CD8-positive, alpha-beta memory T cell (primary cell): ENCODE measurements at regions of chr7 and their contacts with region 1.

Region 1: GRCh38 chr7:101814991-101815834 is 2.2 kb upstream of the CUX1 start:
- DNase-seq: peak; percentile 47 to 76 (median 64)
- H3K4me3 ChIP-seq: peak overlapping the region; percentile 65
- H3K4me3 Mint-ChIP-seq: peak overlapping the region; percentile 83 to 94 (median 89)
- H3K27ac ChIP-seq: peak overlapping the region; percentile 51
- H3K27ac Mint-ChIP-seq: peak overlapping the region; percentile 56 to 94 (median 76)
- H3K4me1 ChIP-seq: peaks cover 16% of the 10 kb centered on the region
- H3K4me1 Mint-ChIP-seq: peaks cover 27 to 36% (median 35%) of the 10 kb centered on the region in 3 donors
- H3K27me3 ChIP-seq: no peaks in the 10 kb centered on the region
- H3K27me3 Mint-ChIP-seq: peaks cover 3 to 5% of the 10 kb centered on the region in 2 donors

Region 2: DNA sequence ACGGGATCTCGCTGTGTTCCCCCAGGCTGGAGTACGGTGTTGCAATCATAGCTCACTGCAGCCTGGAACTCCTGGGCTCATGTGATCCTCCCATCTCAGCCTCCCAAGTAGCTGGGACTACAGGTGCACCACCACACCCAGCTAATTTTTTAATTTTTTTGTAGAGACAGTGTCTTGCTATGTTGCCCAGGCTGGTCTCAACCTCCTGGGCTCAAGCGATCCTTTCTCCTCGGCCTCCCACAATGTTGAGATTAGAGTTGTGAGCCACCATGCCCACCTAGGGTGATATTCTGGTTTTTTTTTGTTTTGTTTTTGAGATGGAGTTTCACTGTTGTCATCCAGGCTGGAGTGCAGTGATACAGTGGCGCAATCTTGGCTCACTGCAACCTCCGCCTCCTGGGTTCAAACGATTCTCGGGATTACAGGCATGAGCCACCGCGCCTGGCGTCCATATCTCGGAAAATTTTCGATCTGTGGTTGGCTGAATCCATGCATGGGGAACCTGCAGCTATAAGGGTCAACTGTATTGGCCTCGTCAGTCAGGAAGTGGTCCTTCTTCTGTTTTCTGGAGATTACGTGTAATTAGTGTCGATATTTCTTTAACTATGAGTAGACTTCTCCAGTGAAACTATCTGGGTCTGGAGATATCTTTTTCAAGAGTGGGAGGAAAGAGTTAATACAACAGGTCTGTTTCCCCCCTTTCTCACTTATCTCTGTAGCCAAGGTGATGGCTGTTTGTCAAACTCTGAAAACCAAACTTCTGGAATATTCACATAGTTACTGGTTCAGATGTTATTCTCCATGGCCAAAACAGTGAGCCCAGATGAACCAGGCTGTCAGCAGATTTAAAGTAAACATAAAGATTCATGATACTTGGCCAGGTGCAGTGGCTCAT is 549.3 kb before region 1 on chr7:
- CTCF ChIA-PET with region 1: no interaction called
- POLR2A ChIA-PET with region 1: no interaction called
- DNase-seq: no peak
- H3K4me3 ChIP-seq: no peak overlapping the region
- H3K4me3 Mint-ChIP-seq: no peak overlapping the region
- H3K27ac ChIP-seq: no peak overlapping the region
- H3K27ac Mint-ChIP-seq: no peak overlapping the region
- H3K4me1 ChIP-seq: no peaks in the 10 kb centered on the region
- H3K4me1 Mint-ChIP-seq: no peaks in the 10 kb centered on the region
- H3K27me3 ChIP-seq: no peaks in the 10 kb centered on the region
- H3K27me3 Mint-ChIP-seq: peaks cover 7 to 27% of the 10 kb centered on the region in 2 donors

Region 3: GRCh38 chr7:101743241-101743994 is 71.8 kb before region 1 on chr7:
- CTCF ChIA-PET with region 1: interaction called, 33 read pairs
- POLR2A ChIA-PET with region 1: no interaction called
- DNase-seq: peak; percentile 45 to 77 (median 65)
- H3K4me3 ChIP-seq: peak overlapping the region; percentile 58
- H3K4me3 Mint-ChIP-seq: peak overlapping the region; percentile 76 to 88 (median 81)
- H3K27ac ChIP-seq: no peak overlapping the region
- H3K27ac Mint-ChIP-seq: peak overlapping the region in 2 of 8 donors; percentile 47 to 51
- H3K4me1 ChIP-seq: peaks cover 9% of the 10 kb centered on the region
- H3K4me1 Mint-ChIP-seq: peaks cover 13 to 17% (median 14%) of the 10 kb centered on the region in 3 donors
- H3K27me3 ChIP-seq: no peaks in the 10 kb centered on the region
- H3K27me3 Mint-ChIP-seq: peaks cover 4 to 8% of the 10 kb centered on the region in 2 donors

Region 4: DNA sequence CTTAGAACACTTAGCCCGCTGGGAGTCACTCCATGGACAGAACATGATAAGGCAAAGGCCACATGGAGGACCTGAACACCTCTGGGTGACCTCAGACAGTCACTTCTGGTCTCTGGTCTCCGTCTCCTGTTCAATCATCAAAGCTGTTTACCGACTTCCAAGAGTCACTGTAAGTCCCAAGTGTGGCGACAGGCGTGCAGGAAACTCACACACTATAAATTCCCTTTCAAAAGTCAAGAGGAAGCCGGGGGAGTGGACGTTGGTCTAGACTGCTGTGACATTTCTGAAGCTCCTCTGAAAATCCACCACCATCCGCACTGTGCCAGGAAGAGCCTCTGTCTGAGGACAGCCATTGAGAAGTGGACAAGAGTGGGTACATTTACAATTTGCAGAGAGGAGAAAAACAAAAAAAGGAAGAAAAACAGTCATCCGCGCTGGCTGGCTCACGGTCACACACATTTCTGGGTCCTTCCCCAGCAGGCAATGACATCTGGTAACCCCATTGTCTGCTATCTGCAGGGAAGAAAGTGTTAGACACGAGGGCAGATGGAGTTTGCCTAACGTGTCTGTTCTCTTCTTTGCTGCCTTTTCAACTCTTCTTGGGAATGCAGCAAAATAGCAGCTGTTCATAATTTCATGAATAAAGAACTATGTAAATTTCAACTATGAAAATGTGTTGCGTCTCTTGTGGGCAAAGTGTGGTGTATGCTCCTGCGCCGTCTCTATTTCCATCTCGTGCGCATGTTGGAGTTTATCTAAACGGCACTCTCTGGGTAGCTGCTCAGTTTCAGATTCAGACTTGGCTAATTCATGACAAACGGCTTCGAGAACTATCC is 30.7 kb before region 1 on chr7:
- CTCF ChIA-PET with region 1: no interaction called
- POLR2A ChIA-PET with region 1: no interaction called
- DNase-seq: no peak
- H3K4me3 ChIP-seq: no peak overlapping the region
- H3K4me3 Mint-ChIP-seq: no peak overlapping the region
- H3K27ac ChIP-seq: no peak overlapping the region
- H3K27ac Mint-ChIP-seq: peak overlapping the region in 1 of 8 donors; percentile 68
- H3K4me1 ChIP-seq: no peaks in the 10 kb centered on the region
- H3K4me1 Mint-ChIP-seq: peaks cover 0 to 2% (median 0%) of the 10 kb centered on the region in 3 donors
- H3K27me3 ChIP-seq: no peaks in the 10 kb centered on the region
- H3K27me3 Mint-ChIP-seq: peaks cover 5 to 8% of the 10 kb centered on the region in 2 donors